ENCODE measurements at regions of chr6 and their contacts with region 1.

Region 1: GRCh38 chr6:7238900-7239589 is 74.0 kb downstream of the SSR1 start:
- DNase-seq: peak; percentile 92
- ATAC-seq: peak; percentile 92
- H3K4me3 Mint-ChIP-seq: no peak overlapping the region
- H3K27ac Mint-ChIP-seq: no peak overlapping the region
- H3K4me1 Mint-ChIP-seq: peaks cover 23% of the 10 kb centered on the region
- H3K27me3 Mint-ChIP-seq: no peaks in the 10 kb centered on the region

Region 2: GRCh38 chr6:6724539-6725467 is 514.2 kb before region 1 on chr6:
- CTCF ChIA-PET with region 1: interaction called, 8 read pairs
- POLR2A ChIA-PET with region 1: no interaction called
- intact Hi-C with region 1: loop called (anchors 1 kb)
- DNase-seq: peak; percentile 79
- ATAC-seq: peak; percentile 93
- H3K4me3 Mint-ChIP-seq: peak overlapping the region; percentile 51
- H3K27ac Mint-ChIP-seq: peak overlapping the region; percentile 29
- H3K4me1 Mint-ChIP-seq: peaks cover 4% of the 10 kb centered on the region
- H3K27me3 Mint-ChIP-seq: peaks cover 3% of the 10 kb centered on the region

Region 3: GRCh38 chr6:6788394-6789020 is 450.5 kb before region 1 on chr6:
- CTCF ChIA-PET with region 1: interaction called, 6 read pairs
- POLR2A ChIA-PET with region 1: no interaction called
- intact Hi-C with region 1: loop called in 1 of 2 experiments (anchors 2 kb)
- DNase-seq: peak; percentile 53
- ATAC-seq: peak; percentile 89
- H3K4me3 Mint-ChIP-seq: no peak overlapping the region
- H3K27ac Mint-ChIP-seq: no peak overlapping the region
- H3K4me1 Mint-ChIP-seq: peaks cover under 1% of the 10 kb centered on the region
- H3K27me3 Mint-ChIP-seq: no peaks in the 10 kb centered on the region

Region 4: GRCh38 chr6:7052115-7053011 is 186.7 kb before region 1 on chr6:
- CTCF ChIA-PET with region 1: no interaction called
- POLR2A ChIA-PET with region 1: no interaction called
- intact Hi-C with region 1: no loop called
- DNase-seq: no peak
- ATAC-seq: peak; percentile 30
- H3K4me3 Mint-ChIP-seq: peak overlapping the region; percentile 41
- H3K27ac Mint-ChIP-seq: no peak overlapping the region
- H3K4me1 Mint-ChIP-seq: peaks cover 6% of the 10 kb centered on the region
- H3K27me3 Mint-ChIP-seq: peaks cover 16% of the 10 kb centered on the region

Region 5: DNA sequence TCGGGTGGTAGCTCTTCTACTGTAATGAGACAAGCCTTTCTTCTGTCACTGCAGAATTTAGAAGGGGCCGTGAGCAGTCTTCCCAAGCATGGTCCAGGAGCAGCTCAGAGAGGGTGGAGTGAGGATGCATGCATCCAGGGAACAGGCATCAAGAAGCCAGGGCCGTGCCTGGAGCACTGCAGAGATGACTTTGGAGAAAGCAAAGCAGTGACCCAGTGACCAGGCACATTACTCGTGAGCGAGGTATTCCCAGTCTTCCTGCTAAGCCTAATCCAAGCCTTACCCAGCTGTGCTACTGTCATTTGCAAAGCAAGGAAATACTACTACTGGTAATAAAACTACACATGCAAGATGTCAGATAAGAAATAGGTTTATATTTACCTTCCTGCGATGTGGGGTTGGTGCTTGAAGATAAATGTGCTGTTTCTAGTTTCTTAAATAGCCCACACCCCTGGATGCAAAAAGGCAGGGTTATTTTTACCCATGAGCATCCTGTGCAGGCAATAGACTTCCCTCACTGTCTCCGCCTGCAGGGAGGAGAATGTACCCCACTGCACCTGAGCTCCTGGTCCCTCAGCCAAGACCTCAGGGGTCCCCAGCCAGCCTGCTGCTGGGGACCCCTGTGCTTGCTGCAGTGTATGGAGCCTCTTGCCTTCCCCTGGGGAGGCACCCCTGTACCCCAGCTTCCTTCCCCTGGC is 11.1 kb after region 1 on chr6:
- CTCF ChIA-PET with region 1: interaction called, 12 read pairs
- POLR2A ChIA-PET with region 1: no interaction called
- intact Hi-C with region 1: no loop called
- DNase-seq: no peak
- ATAC-seq: no peak
- H3K4me3 Mint-ChIP-seq: no peak overlapping the region
- H3K27ac Mint-ChIP-seq: no peak overlapping the region
- H3K4me1 Mint-ChIP-seq: no peaks in the 10 kb centered on the region
- H3K27me3 Mint-ChIP-seq: no peaks in the 10 kb centered on the region

Region 6: GRCh38 chr6:8066108-8066507 is 827.1 kb after region 1 on chr6:
- CTCF ChIA-PET with region 1: no interaction called
- POLR2A ChIA-PET with region 1: no interaction called
- intact Hi-C with region 1: no loop called
- DNase-seq: peak; percentile 18
- ATAC-seq: no peak
- H3K4me3 Mint-ChIP-seq: no peak overlapping the region
- H3K27ac Mint-ChIP-seq: peak overlapping the region; percentile 94
- H3K4me1 Mint-ChIP-seq: peaks cover 29% of the 10 kb centered on the region
- H3K27me3 Mint-ChIP-seq: no peaks in the 10 kb centered on the region

Measured in activated CD4-positive, alpha-beta T cell treated with anti-CD3 and anti-CD28 coated beads for 36 hours (primary cell).